AG04450 (cell line): ENCODE measurements at regions of chr3 and their contacts with region 1.

Region 1: GRCh38 chr3:57281715-57282114 is 10.8 kb downstream of the ASB14 start:
- DNase-seq: no peak
- H3K4me3 ChIP-seq: no peak overlapping the region
- H3K27ac ChIP-seq: no peak overlapping the region
- H3K27me3 ChIP-seq: no peaks in the 10 kb centered on the region
- CTCF ChIP-seq: no peak

Region 2: DNA sequence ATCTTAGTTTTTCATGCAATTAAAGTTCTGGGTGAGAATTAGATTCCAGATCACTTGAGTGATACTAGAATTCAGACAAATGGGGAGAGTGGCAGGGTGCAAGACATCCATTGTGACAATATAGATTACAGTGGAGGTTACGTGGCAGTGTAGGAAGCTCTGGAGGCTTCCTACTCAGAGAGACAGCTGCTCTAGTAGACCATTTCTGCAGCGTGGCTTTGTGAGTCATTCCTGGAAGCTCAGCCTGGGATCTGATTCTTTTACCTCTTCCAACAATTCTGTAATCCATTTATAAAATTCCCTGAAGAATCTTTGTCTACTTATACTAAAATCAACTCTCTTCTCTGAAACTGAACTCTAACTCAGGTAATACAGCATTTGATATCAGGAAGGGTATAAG is 101.2 kb after region 1 on chr3:
- CTCF ChIA-PET with region 1: no interaction called
- POLR2A ChIA-PET with region 1: interaction called, 12 read pairs
- DNase-seq: no peak
- H3K4me3 ChIP-seq: no peak overlapping the region
- H3K27ac ChIP-seq: no peak overlapping the region
- H3K27me3 ChIP-seq: no peaks in the 10 kb centered on the region
- CTCF ChIP-seq: no peak